ENCODE measurements at regions of chr9 and their contacts with region 1.

Region 1: DNA sequence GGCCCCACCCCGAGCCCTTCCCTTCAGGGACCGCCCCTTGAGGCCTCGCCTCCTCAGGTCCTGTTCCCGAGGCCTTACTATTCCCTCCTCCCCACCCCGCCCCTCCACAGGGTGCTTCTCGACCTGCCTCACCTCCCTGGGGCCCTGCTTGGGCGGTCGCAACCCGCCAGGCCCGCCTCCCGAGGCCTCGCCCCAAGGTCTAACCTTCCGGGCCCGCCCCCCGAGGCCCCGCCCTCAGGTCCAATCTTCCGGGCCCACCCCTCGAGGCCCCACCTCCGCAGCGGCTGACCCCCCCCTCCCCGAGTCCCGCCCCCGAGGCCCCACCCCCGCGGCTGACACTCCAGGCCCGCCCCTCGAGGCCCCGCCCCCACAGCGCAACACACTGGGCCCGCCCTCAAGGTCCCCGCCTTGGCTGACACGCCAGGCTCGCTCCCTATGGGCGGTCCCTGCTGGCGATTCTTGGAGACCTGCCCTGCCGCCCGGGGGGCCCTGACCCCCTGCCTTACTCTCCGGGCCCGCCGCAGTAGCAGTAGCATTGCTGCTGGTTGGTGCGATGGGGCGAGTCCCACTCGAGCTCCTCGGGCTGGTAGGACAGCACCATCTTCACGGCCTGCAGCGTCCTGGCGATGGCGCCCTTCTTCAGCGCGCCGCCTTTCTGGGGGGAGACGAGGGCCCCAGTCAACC is 8.2 kb downstream of the PHF19 start:
- DNase-seq: peak; percentile 97 to 98
- H3K4me3 ChIP-seq: peak overlapping the region; percentile 24 to 68 (median 67)
- H3K27ac ChIP-seq: 0 out of 2 replicates have a peak overlapping the region, but pooled peaks have one; percentile 32
- H3K4me1 ChIP-seq: peaks cover 9 to 28% (median 15%) of the 10 kb centered on the region in 4 experiments; a peak in 6 of 7 replicates
- H3K27me3 ChIP-seq: no peaks in the 10 kb centered on the region; a peak in 2 of 7 replicates
- CTCF ChIP-seq: peak; percentile 52 to 68 (median 62)
- EP300 ChIP-seq: peak in 1 of 2 experiments; percentile 46; a peak in 1 of 3 replicates
- POLR2A ChIP-seq: 0 out of 3 replicates have a peak, but pooled peaks of 1 of the 2 experiments have one; percentile 1
- RAD21 ChIP-seq: peak; percentile 42 to 60

Region 2: GRCh38 chr9:120842690-120843499 is 25.9 kb before region 1 on chr9 and contains the start of gene PSMD5:
- CTCF ChIA-PET with region 1: interaction called, 10 read pairs
- POLR2A ChIA-PET with region 1: no interaction called
- DNase-seq: peak; percentile 85 to 96
- H3K4me3 ChIP-seq: peak within 1 kb of the TSS; percentile 91 to 97 (median 94)
- H3K27ac ChIP-seq: peak within 1 kb of the TSS; percentile 87
- H3K4me1 ChIP-seq: peaks cover 0 to 12% (median 6%) of the 10 kb centered on the region in 4 experiments; a peak in 4 of 7 replicates
- H3K27me3 ChIP-seq: no peaks in the 10 kb centered on the region
- CTCF ChIP-seq: no peak; a peak in 1 of 4 replicates
- EP300 ChIP-seq: no peak
- POLR2A ChIP-seq: peak; percentile 87 to 95
- RAD21 ChIP-seq: peak in 1 of 2 experiments; percentile 22; a peak in 1 of 4 replicates
- total RNA-seq, gene PSMD5: 30.0 and 30.5 TPM in 2 replicates

Region 3: DNA sequence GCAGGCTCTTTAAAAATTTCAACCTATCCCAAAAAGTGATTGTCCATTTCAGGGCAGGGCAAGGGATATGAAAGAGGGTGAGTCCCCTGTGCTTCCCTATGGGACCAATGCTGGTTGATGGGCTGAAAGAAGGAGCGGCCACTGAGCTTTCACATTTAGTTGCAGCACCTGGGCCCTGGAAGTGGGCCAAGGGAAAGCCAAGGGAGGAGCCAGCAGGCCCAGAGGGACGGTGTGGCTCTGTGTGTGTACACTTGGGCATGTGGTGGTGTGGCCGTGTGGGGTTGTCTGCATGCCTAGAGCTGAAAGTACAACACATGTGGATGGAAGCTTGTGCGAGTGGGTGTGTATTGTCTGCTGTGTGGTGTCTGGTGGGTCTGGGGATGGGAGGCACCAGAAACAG is 12.1 kb before region 1 on chr9:
- CTCF ChIA-PET with region 1: interaction called, 70 read pairs
- POLR2A ChIA-PET with region 1: interaction called, 61 read pairs
- DNase-seq: no peak
- H3K4me3 ChIP-seq: no peak overlapping the region
- H3K27ac ChIP-seq: no peak overlapping the region
- H3K4me1 ChIP-seq: peaks cover 0 to 12% (median 8%) of the 10 kb centered on the region in 4 experiments; a peak in 6 of 7 replicates
- H3K27me3 ChIP-seq: no peaks in the 10 kb centered on the region
- CTCF ChIP-seq: no peak
- EP300 ChIP-seq: no peak
- POLR2A ChIP-seq: no peak
- RAD21 ChIP-seq: no peak

Region 4: DNA sequence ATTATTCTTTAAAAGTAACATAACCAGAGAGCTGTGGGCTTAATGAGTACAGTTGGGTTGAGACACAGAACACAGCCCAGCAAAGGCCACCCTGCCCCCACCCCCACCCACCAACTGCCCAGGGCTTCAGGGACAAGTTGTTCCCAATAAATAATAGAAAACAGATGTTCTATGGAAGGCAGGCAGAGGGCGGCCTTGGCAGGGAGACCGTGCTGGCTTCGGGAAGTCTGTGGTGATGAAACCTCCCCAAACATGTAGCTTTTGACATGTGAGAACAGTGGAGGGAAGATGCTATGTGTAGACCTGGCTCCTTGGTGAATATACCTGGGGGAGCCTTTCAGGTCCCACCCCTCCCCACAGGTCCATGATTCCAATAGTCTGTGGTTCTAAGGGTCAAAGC is 47.8 kb after region 1 on chr9:
- CTCF ChIA-PET with region 1: interaction called, 11 read pairs
- POLR2A ChIA-PET with region 1: no interaction called
- DNase-seq: no peak
- H3K4me3 ChIP-seq: no peak overlapping the region
- H3K27ac ChIP-seq: no peak overlapping the region
- H3K4me1 ChIP-seq: peaks cover 0 to 6% (median 3%) of the 10 kb centered on the region in 4 experiments; a peak in 4 of 7 replicates
- H3K27me3 ChIP-seq: no peaks in the 10 kb centered on the region; a peak in 1 of 7 replicates
- CTCF ChIP-seq: peak; percentile 19 to 36 (median 30)
- EP300 ChIP-seq: no peak
- POLR2A ChIP-seq: no peak
- RAD21 ChIP-seq: peak; percentile 28 to 53; a peak in 3 of 4 replicates

Region 5: GRCh38 chr9:120936011-120936763 is 67.4 kb after region 1 on chr9:
- CTCF ChIA-PET with region 1: interaction called, 108 read pairs
- POLR2A ChIA-PET with region 1: no interaction called
- DNase-seq: peak; percentile 66 to 96
- H3K4me3 ChIP-seq: no peak overlapping the region
- H3K27ac ChIP-seq: no peak overlapping the region
- H3K4me1 ChIP-seq: peaks cover 0 to 2% (median under 1%) of the 10 kb centered on the region in 4 experiments; a peak in 2 of 7 replicates
- H3K27me3 ChIP-seq: no peaks in the 10 kb centered on the region
- CTCF ChIP-seq: peak; percentile 92 to 93 (median 92)
- EP300 ChIP-seq: no peak
- POLR2A ChIP-seq: no peak
- RAD21 ChIP-seq: peak; percentile 89 to 92

Region 6: GRCh38 chr9:121133149-121133816 is 264.5 kb after region 1 on chr9:
- CTCF ChIA-PET with region 1: no interaction called
- POLR2A ChIA-PET with region 1: no interaction called
- DNase-seq: peak in 1 of 2 experiments; percentile 65
- H3K4me3 ChIP-seq: no peak overlapping the region
- H3K27ac ChIP-seq: no peak overlapping the region
- H3K4me1 ChIP-seq: peaks cover 0 to 12% (median 4%) of the 10 kb centered on the region in 4 experiments; a peak in 4 of 7 replicates
- H3K27me3 ChIP-seq: no peaks in the 10 kb centered on the region; a peak in 1 of 7 replicates
- CTCF ChIP-seq: no peak
- EP300 ChIP-seq: no peak
- POLR2A ChIP-seq: no peak
- RAD21 ChIP-seq: no peak